MCF 10A (cell line): ENCODE measurements at regions of chr17 and their contacts with region 1.

Region 1: GRCh38 chr17:27353461-27354050 is 59.6 kb downstream of the WSB1 start:
- DNase-seq: peak; percentile 92
- H3K4me3 Mint-ChIP-seq: peak overlapping the region; percentile 85
- H3K27ac Mint-ChIP-seq: peak overlapping the region; percentile 97
- H3K4me1 Mint-ChIP-seq: peaks cover 19% of the 10 kb centered on the region
- H3K27me3 Mint-ChIP-seq: no peaks in the 10 kb centered on the region
- CTCF ChIP-seq: peak; percentile 95

Region 2: GRCh38 chr17:27381007-27381501 is 27.5 kb after region 1 on chr17:
- CTCF ChIA-PET with region 1: interaction called, 12 read pairs
- POLR2A ChIA-PET with region 1: no interaction called
- intact Hi-C with region 1: no loop called
- DNase-seq: peak; percentile 61
- H3K4me3 Mint-ChIP-seq: no peak overlapping the region
- H3K27ac Mint-ChIP-seq: no peak overlapping the region
- H3K4me1 Mint-ChIP-seq: peaks cover 6% of the 10 kb centered on the region
- H3K27me3 Mint-ChIP-seq: no peaks in the 10 kb centered on the region
- CTCF ChIP-seq: peak; percentile 69

Region 3: DNA sequence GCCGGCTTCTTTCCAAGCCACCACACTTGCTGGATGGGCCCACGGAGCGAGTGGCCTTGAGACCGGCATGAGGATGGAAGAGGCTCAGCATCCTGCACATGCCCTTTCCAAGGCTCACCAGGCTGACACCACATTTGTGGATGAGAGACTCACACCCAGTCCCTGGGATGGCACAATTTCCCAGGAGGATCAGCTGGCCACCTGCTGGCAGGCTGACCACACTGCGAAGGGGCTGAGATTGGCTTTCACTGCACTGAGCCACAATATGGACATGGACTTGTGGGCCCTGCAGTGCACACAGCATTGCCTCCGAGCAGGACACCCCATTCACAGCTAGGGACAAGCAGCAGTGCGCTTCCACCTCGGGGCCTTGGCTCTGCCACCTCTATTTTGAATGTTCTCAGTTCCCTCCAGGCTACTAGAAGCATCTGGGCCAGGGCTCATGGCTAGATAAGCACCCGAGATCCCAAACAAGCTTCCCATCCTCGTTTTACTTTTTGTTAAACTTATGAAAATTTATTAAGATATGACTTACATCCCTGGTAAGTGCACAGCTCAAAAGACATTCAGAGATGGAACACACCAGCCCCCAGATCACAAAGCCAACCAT is 77.4 kb after region 1 on chr17:
- CTCF ChIA-PET with region 1: interaction called, 12 read pairs
- POLR2A ChIA-PET with region 1: no interaction called
- intact Hi-C with region 1: no loop called
- DNase-seq: peak; percentile 66
- H3K4me3 Mint-ChIP-seq: no peak overlapping the region
- H3K27ac Mint-ChIP-seq: no peak overlapping the region
- H3K4me1 Mint-ChIP-seq: no peaks in the 10 kb centered on the region
- H3K27me3 Mint-ChIP-seq: no peaks in the 10 kb centered on the region
- CTCF ChIP-seq: peak; percentile 60